ENCODE measurements at regions of chr5 and their contacts with region 1.

Region 1: GRCh38 chr5:176553262-176554077 is 4.3 kb downstream of the CDHR2 start:
- DNase-seq: no peak

Region 2: GRCh38 chr5:176629853-176630712 is 76.6 kb after region 1 on chr5 and contains the starts of genes EIF4E1B and SNCB:
- intact Hi-C with region 1: loop called in 1 of 2 experiments (anchors 5 kb)
- DNase-seq: no peak
- total RNA-seq, gene EIF4E1B: not detected
- total RNA-seq, gene SNCB: not detected

Region 3: DNA sequence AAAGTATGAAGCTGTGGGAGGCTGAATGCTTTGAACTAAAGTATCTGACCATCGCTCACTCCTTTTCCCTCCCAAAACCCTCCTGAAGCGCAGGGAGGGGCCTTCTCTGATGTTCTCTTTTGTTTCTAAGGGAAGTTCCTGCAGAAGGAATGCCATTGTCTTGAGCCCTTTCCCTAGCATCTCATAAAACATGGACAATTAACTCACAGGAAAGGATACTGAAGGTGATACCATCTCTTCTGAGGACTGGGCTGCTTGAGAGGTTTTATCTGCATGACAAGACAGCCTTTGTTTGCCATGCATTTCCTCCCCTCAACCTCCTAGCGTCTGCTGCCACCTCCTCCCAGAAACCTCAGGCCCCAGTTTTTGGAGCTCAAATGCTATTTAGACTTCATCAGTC is 1573.1 kb after region 1 on chr5:
- intact Hi-C with region 1: loop called in 1 of 2 experiments (anchors 5 kb)
- DNase-seq: no peak

Measured in posterior vena cava (tissue), 2 donors.